OCI-LY7 (cell line): ENCODE measurements at regions of chr13 and their contacts with region 1.

Region 1: DNA sequence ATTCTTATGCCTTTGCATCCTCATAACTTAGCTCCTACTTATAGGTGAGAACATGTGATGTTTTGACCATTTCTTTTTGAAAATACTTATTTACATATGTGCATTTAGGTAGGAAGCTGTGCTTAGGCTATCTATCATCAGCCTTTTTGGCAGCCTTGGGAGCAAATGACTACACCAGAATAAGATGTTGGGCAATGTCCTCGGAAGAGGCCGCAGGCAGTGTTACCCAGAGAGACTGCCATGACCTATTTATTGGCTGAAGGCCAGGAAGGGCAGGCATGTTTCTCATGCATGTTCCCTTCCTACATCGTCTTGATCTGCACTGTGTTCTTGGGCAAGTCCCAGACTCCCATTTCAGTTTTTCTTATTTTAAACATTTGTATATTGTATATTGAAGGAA is 122.3 kb downstream of the B3GLCT start:
- DNase-seq: peak; percentile 41
- H3K4me3 ChIP-seq: peak overlapping the region; percentile 55
- H3K27ac ChIP-seq: peak overlapping the region; percentile 98
- H3K4me1 ChIP-seq: peaks cover 78% of the 10 kb centered on the region
- CTCF ChIP-seq: no peak

Region 2: DNA sequence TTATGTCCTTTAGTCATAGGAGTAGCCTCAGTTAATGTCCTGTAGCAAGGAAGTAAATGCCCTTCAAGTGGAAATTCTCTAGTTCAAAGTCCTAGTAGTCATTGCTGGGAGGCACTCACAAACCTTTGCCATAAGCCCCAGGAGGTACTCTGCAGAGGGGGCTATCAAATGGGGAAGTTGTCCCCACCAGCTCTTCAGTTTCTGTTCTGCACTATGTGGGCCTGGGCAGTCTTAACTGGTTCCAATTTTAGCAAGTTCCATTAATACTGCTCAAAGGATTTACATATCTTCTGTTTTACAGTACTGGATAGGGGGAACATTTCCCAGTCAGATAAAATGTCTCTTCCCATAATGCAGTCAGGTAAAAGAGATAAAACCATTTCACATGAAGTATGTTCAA is 20.9 kb before region 1 on chr13:
- CTCF ChIA-PET with region 1: no interaction called
- POLR2A ChIA-PET with region 1: no interaction called
- intact Hi-C with region 1: no loop called
- DNase-seq: peak; percentile 54
- H3K4me3 ChIP-seq: no peak overlapping the region
- H3K27ac ChIP-seq: no peak overlapping the region
- H3K4me1 ChIP-seq: peaks cover 13% of the 10 kb centered on the region
- CTCF ChIP-seq: no peak

Region 3: DNA sequence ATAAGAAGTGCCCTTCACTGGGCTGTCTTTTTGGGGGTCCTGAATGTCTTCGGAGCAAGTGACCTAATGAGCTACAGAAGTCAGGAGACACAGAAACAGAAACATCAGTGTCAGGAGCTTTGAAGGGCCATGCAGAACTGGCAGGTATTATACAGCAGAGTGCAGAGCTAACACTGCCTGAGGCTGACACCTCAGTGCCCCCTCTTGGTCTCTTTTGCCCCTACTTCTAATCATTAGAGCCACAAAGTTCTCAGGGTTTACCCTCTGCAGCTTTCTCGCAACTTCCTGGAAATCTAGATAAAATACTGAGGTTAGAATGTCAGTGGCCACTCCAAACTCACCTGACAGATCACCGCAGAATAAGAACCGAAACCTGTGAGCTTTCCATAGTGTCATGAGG is 50.4 kb after region 1 on chr13:
- CTCF ChIA-PET with region 1: no interaction called
- POLR2A ChIA-PET with region 1: interaction called, 9 read pairs
- intact Hi-C with region 1: loop called (anchors 2 kb)
- DNase-seq: peak; percentile 71
- H3K4me3 ChIP-seq: no peak overlapping the region
- H3K27ac ChIP-seq: no peak overlapping the region
- H3K4me1 ChIP-seq: peaks cover 15% of the 10 kb centered on the region
- CTCF ChIP-seq: peak; percentile 71

Region 4: DNA sequence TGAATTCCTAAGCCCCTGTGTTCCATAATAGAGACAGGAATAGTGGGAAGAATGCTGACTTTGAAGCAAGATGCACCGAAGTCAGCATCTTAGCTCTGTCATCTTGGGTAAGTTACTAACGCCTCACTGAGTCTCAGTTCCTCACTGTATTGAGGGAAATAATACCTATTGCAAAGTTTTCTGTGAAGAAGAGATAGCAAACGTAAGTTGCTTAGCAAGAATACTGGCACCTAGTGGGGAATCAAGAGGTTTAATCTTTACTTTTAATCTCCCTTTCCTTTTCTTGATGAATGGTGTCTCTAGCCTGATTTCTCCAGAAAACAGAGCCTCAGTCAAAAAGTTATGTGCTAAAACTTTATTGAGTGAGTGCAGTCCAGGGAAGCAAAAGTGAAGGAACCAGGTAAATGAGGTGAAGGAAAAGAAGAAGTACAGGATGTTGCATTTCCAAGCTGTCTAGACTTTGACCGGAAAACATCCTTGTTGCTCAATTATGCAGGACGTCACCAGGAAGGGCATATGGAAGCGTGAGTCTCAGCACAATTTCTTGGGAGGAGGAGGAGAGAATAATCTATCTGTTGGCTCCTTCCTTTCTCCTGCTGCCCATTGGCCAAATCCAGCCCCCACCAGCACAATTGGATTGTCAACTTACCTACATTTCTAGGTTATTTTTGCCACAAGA is 87.8 kb after region 1 on chr13:
- CTCF ChIA-PET with region 1: no interaction called
- POLR2A ChIA-PET with region 1: interaction called, 9 read pairs
- intact Hi-C with region 1: loop called (anchors 2 kb)
- DNase-seq: peak; percentile 78
- H3K4me3 ChIP-seq: no peak overlapping the region
- H3K27ac ChIP-seq: no peak overlapping the region
- H3K4me1 ChIP-seq: peaks cover 10% of the 10 kb centered on the region
- CTCF ChIP-seq: peak; percentile 78

Region 5: GRCh38 chr13:31424117-31424729 is 102.2 kb after region 1 on chr13:
- CTCF ChIA-PET with region 1: no interaction called
- POLR2A ChIA-PET with region 1: no interaction called
- intact Hi-C with region 1: loop called (anchors 5 kb)
- DNase-seq: peak; percentile 88
- H3K4me3 ChIP-seq: no peak overlapping the region
- H3K27ac ChIP-seq: no peak overlapping the region
- H3K4me1 ChIP-seq: peaks cover 9% of the 10 kb centered on the region
- CTCF ChIP-seq: peak; percentile 97